ENCODE measurements at regions of chr7 and their contacts with region 1.

Region 1: DNA sequence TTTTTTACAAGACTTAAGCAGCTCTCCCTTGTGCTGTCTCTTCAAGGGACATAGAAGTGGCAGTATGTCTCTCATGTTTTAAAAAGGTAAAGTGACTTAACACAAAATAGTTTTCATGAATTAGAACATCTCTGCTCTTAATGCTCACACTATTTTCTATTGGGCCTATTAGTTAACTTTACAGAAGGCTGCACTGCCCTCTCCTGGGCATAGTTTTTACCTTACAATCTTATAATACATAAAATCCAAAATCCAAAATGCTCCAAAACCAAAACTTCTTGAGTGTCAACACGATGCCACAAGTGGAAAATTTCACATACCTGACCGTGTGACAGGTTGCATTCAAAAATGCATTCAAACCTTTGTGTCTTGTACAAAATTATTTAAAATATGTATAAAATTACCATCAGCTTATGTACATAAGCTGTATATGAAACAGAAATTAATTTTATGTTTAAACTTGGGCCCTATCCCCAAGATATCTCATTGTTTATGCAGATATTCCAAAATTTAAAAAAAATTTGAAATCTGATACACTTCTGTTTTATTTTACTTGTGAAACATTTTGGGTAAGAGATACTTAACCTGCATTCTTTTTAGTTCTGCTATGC is 25.8 kb downstream of the TES start:
- DNase-seq: peak; percentile 65
- ATAC-seq: peak; percentile 75
- H3K4me3 Mint-ChIP-seq: no peak overlapping the region
- H3K27ac Mint-ChIP-seq: no peak overlapping the region
- H3K4me1 Mint-ChIP-seq: peaks cover 42% of the 10 kb centered on the region
- H3K27me3 Mint-ChIP-seq: no peaks in the 10 kb centered on the region

Region 2: GRCh38 chr7:116138202-116138801 is 97.8 kb before region 1 on chr7:
- CTCF ChIA-PET with region 1: interaction called, 15 read pairs
- DNase-seq: peak; percentile 46
- ATAC-seq: peak; percentile 92
- H3K4me3 Mint-ChIP-seq: no peak overlapping the region
- H3K27ac Mint-ChIP-seq: no peak overlapping the region
- H3K4me1 Mint-ChIP-seq: peaks cover 31% of the 10 kb centered on the region
- H3K27me3 Mint-ChIP-seq: peaks cover 13% of the 10 kb centered on the region

Region 3: GRCh38 chr7:116173051-116174028 is 62.8 kb before region 1 on chr7:
- CTCF ChIA-PET with region 1: interaction called, 63 read pairs
- DNase-seq: no peak
- ATAC-seq: peak; percentile 45
- H3K4me3 Mint-ChIP-seq: no peak overlapping the region
- H3K27ac Mint-ChIP-seq: no peak overlapping the region
- H3K4me1 Mint-ChIP-seq: peaks cover 8% of the 10 kb centered on the region
- H3K27me3 Mint-ChIP-seq: peaks cover 15% of the 10 kb centered on the region

Region 4: DNA sequence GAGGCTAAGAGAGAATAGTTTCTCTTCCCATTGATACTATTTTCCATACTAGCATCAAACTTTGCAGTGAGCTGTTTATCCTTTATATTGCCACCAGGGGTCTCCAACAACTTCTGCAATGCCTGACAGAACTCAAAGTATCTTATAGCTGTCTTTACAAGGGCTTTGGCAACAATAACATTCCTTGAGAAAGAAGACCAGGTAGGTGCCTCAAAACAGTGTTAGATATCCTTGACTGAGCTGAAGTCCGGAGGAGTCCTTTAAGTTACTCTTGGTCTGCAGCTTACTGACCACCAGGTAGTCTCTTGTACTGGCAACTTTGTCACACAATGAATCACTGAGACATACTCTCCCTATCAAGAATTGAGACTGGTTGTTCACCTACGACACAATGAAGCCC is 55.8 kb before region 1 on chr7:
- CTCF ChIA-PET with region 1: interaction called, 63 read pairs
- DNase-seq: no peak
- ATAC-seq: peak; percentile 77
- H3K4me3 Mint-ChIP-seq: no peak overlapping the region
- H3K27ac Mint-ChIP-seq: no peak overlapping the region
- H3K4me1 Mint-ChIP-seq: no peaks in the 10 kb centered on the region
- H3K27me3 Mint-ChIP-seq: no peaks in the 10 kb centered on the region

Region 5: DNA sequence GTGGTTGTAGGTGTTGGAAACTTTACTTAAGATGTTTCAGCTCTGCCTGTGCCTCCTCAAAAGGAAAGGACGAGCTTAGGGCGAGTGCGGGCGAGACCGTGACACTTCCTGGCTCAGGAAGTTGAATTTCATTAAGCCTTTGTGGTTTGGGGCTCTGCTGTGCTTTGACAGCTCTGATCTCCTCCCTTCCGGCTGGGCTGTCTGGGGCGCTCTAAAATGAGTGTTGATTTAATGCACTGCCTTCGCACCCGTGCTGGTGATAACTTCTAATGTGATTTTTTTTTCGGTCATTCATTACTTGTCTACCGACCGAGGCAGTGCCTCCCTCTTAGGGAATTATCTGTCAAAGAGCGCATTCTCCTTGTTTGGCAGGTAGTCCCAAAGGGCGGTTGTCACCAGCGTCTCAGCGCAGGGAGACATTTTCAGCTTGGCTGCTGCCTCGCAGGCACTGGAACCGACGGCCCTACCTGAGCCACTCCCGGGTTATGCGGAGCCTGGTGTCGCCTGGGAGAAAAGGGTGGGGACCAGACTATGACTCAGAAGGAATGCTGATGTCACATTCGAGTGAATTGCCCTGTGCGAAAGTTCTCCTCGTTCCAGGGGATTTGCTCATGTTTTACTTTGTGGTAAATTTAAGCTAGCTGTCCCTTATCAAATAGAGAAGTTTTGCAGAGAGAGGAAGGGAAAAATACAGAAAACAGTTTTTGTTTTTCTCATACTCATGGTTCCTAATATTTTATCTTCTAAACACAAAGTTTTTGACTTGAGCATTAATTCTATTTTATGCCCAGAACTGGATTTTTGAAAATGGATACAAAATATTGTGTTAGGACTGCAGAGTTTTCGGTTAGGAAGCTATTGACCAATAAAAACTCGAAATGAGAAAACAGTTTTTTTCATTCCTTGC is 24.9 kb before region 1 on chr7:
- CTCF ChIA-PET with region 1: interaction called, 19 read pairs
- DNase-seq: peak; percentile 88
- ATAC-seq: peak; percentile 82
- H3K4me3 Mint-ChIP-seq: peak overlapping the region; percentile 96
- H3K27ac Mint-ChIP-seq: peak overlapping the region; percentile 98
- H3K4me1 Mint-ChIP-seq: peaks cover 52% of the 10 kb centered on the region
- H3K27me3 Mint-ChIP-seq: no peaks in the 10 kb centered on the region

Region 6: GRCh38 chr7:116219288-116219687 is 16.8 kb before region 1 on chr7:
- CTCF ChIA-PET with region 1: interaction called, 12 read pairs
- DNase-seq: no peak
- ATAC-seq: no peak
- H3K4me3 Mint-ChIP-seq: no peak overlapping the region
- H3K27ac Mint-ChIP-seq: no peak overlapping the region
- H3K4me1 Mint-ChIP-seq: peaks cover 68% of the 10 kb centered on the region
- H3K27me3 Mint-ChIP-seq: no peaks in the 10 kb centered on the region

Measured in activated CD8-positive, alpha-beta memory T cell treated with anti-CD3 and anti-CD28 coated beads, Interleukin-2, amount 10 ng/mL, durations not matched to agents 7 days and 5 days (primary cell).